Breast epithelium (tissue), 4 donors: ENCODE measurements at regions of chr5 and their contacts with region 1.

Region 1: GRCh38 chr5:122480146-122480545 is 168.1 kb downstream of the SNCAIP start:
- DNase-seq: no peak
- H3K4me3 ChIP-seq: no peak overlapping the region
- H3K27ac ChIP-seq: no peak overlapping the region
- H3K4me1 ChIP-seq: no peaks in the 10 kb centered on the region
- H3K27me3 ChIP-seq: no peaks in the 10 kb centered on the region
- CTCF ChIP-seq: no peak
- POLR2A ChIP-seq: no peak

Region 2: GRCh38 chr5:123099514-123100151 is 619.5 kb after region 1 on chr5:
- intact Hi-C with region 1: loop called (anchors 10 kb)
- DNase-seq: no peak
- H3K4me3 ChIP-seq: peak overlapping the region; percentile 17 to 61 (median 36)
- H3K27ac ChIP-seq: no peak overlapping the region
- H3K4me1 ChIP-seq: no peaks in the 10 kb centered on the region
- H3K27me3 ChIP-seq: peaks cover 0 to 48% of the 10 kb centered on the region in 2 donors
- CTCF ChIP-seq: no peak
- POLR2A ChIP-seq: no peak